ENCODE measurements at regions of chr3 and their contacts with region 1.

Region 1: DNA sequence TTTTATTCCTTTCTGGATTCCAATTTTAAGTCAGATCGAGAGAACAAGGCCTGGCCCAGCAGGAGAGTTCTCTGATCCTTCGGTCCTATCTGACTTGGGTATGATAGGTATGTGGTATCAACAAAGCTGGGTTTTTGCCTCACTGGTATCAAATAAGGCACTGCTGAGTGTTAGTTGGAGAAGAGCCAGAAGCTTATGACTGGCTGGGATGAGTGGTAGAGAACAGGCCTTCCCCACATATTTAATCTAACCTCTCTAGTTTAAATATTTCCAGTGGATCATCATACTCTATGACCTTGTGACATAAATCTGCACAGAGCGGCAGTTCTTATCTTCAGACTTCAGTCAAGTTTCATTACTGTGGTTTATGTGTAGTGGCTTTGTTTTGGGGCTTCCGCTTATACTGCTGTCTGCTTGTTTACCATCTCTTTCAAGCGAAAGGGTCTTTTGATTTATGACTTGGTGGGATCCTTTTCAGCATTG is 164.5 kb downstream of the PTPRG start:
- DNase-seq: no peak
- ATAC-seq: peak; percentile 39
- H3K4me3 ChIP-seq: no peak overlapping the region
- H3K27ac ChIP-seq: no peak overlapping the region
- H3K4me1 ChIP-seq: no peaks in the 10 kb centered on the region
- H3K27me3 ChIP-seq: no peaks in the 10 kb centered on the region
- CTCF ChIP-seq: no peak
- EP300 ChIP-seq: 0 out of 4 replicates have a peak, but pooled peaks of 1 of the 2 experiments have one; percentile 39
- POLR2A ChIP-seq: no peak
- RAD21 ChIP-seq: no peak

Region 2: GRCh38 chr3:61637088-61638051 is 88.5 kb before region 1 on chr3:
- CTCF ChIA-PET with region 1: no interaction called
- POLR2A ChIA-PET with region 1: no interaction called
- RAD21 ChIA-PET with region 1: no interaction called
- SMC1A ChIA-PET with region 1: no interaction called
- in situ Hi-C with region 1: no loop called
- intact Hi-C with region 1: loop called (anchors 5 kb)
- DNase-seq: peak; percentile 48
- ATAC-seq: peak; percentile 97
- H3K4me3 ChIP-seq: no peak overlapping the region
- H3K27ac ChIP-seq: no peak overlapping the region
- H3K4me1 ChIP-seq: peaks cover 10% of the 10 kb centered on the region; the same call in 1 of the 2 replicates
- H3K27me3 ChIP-seq: no peaks in the 10 kb centered on the region
- CTCF ChIP-seq: no peak
- EP300 ChIP-seq: peak; percentile 56 to 95; a peak in 3 of 4 replicates
- POLR2A ChIP-seq: no peak
- RAD21 ChIP-seq: no peak

Region 3: GRCh38 chr3:61669668-61670299 is 56.1 kb before region 1 on chr3:
- CTCF ChIA-PET with region 1: no interaction called
- POLR2A ChIA-PET with region 1: interaction called, 3 read pairs
- RAD21 ChIA-PET with region 1: interaction called, 10 read pairs
- SMC1A ChIA-PET with region 1: interaction called, 5 read pairs
- in situ Hi-C with region 1: no loop called
- intact Hi-C with region 1: no loop called
- DNase-seq: no peak
- ATAC-seq: peak; percentile 90
- H3K4me3 ChIP-seq: no peak overlapping the region
- H3K27ac ChIP-seq: no peak overlapping the region
- H3K4me1 ChIP-seq: no peaks in the 10 kb centered on the region
- H3K27me3 ChIP-seq: no peaks in the 10 kb centered on the region
- CTCF ChIP-seq: no peak
- EP300 ChIP-seq: no peak
- POLR2A ChIP-seq: no peak
- RAD21 ChIP-seq: no peak

Region 4: GRCh38 chr3:61682671-61683548 is 43.0 kb before region 1 on chr3:
- CTCF ChIA-PET with region 1: interaction called, 3 read pairs
- POLR2A ChIA-PET with region 1: no interaction called
- RAD21 ChIA-PET with region 1: no interaction called
- SMC1A ChIA-PET with region 1: interaction called, 10 read pairs
- in situ Hi-C with region 1: no loop called
- intact Hi-C with region 1: no loop called
- DNase-seq: no peak
- ATAC-seq: peak; percentile 57
- H3K4me3 ChIP-seq: no peak overlapping the region
- H3K27ac ChIP-seq: no peak overlapping the region
- H3K4me1 ChIP-seq: no peaks in the 10 kb centered on the region
- H3K27me3 ChIP-seq: no peaks in the 10 kb centered on the region; a peak in 1 of 4 replicates
- CTCF ChIP-seq: no peak
- EP300 ChIP-seq: 0 out of 4 replicates have a peak, but pooled peaks of 1 of the 2 experiments have one; percentile 51
- POLR2A ChIP-seq: no peak
- RAD21 ChIP-seq: no peak

Region 5: DNA sequence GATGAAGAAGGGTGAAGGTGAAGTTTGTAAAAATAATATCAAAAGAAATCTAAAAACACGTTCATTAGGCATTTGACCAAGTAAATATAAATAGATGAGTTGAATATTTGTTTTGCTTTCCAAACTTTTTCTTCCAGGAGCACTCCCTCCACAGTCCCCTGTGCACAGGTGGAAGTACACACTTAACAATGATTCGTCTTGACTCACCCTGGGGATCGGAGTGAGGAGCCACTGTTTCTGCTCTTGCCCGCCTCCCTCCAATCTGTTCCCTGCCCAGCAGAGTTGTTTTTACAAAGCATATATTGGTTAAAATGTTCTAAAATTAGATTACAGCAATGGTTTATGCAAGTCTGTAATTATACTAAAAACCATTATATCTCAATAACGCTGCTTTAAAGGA is 10.6 kb after region 1 on chr3:
- CTCF ChIA-PET with region 1: interaction called, 4 read pairs
- POLR2A ChIA-PET with region 1: interaction called, 5 read pairs
- RAD21 ChIA-PET with region 1: interaction called, 4 read pairs
- SMC1A ChIA-PET with region 1: interaction called, 22 read pairs
- in situ Hi-C with region 1: no loop called
- intact Hi-C with region 1: no loop called
- DNase-seq: no peak
- ATAC-seq: no peak
- H3K4me3 ChIP-seq: no peak overlapping the region
- H3K27ac ChIP-seq: no peak overlapping the region
- H3K4me1 ChIP-seq: no peaks in the 10 kb centered on the region
- H3K27me3 ChIP-seq: no peaks in the 10 kb centered on the region
- CTCF ChIP-seq: no peak
- EP300 ChIP-seq: no peak
- POLR2A ChIP-seq: no peak
- RAD21 ChIP-seq: no peak

Region 6: GRCh38 chr3:61821823-61822251 is 95.9 kb after region 1 on chr3:
- CTCF ChIA-PET with region 1: interaction called, 3 read pairs
- POLR2A ChIA-PET with region 1: no interaction called
- RAD21 ChIA-PET with region 1: interaction called, 3 read pairs
- SMC1A ChIA-PET with region 1: interaction called, 15 read pairs
- in situ Hi-C with region 1: no loop called
- intact Hi-C with region 1: no loop called
- DNase-seq: no peak
- ATAC-seq: peak; percentile 41
- H3K4me3 ChIP-seq: no peak overlapping the region
- H3K27ac ChIP-seq: no peak overlapping the region
- H3K4me1 ChIP-seq: no peaks in the 10 kb centered on the region
- H3K27me3 ChIP-seq: no peaks in the 10 kb centered on the region
- CTCF ChIP-seq: no peak
- EP300 ChIP-seq: no peak
- POLR2A ChIP-seq: no peak
- RAD21 ChIP-seq: no peak

Region 7: GRCh38 chr3:62266668-62267283 is 540.9 kb after region 1 on chr3:
- CTCF ChIA-PET with region 1: no interaction called
- POLR2A ChIA-PET with region 1: no interaction called
- RAD21 ChIA-PET with region 1: no interaction called
- SMC1A ChIA-PET with region 1: no interaction called
- in situ Hi-C with region 1: no loop called
- intact Hi-C with region 1: no loop called
- DNase-seq: no peak
- ATAC-seq: no peak
- H3K4me3 ChIP-seq: no peak overlapping the region
- H3K27ac ChIP-seq: no peak overlapping the region
- H3K4me1 ChIP-seq: no peaks in the 10 kb centered on the region
- H3K27me3 ChIP-seq: no peaks in the 10 kb centered on the region
- CTCF ChIP-seq: no peak
- EP300 ChIP-seq: no peak
- POLR2A ChIP-seq: no peak
- RAD21 ChIP-seq: no peak